Tibial artery (tissue), 4 donors: ENCODE measurements at regions of chr5 and their contacts with region 1.

Region 1: GRCh38 chr5:125446996-125447395 is 700.6 kb upstream of the ZNF608 start:
- DNase-seq: no peak
- H3K4me3 ChIP-seq: no peak overlapping the region
- H3K27ac ChIP-seq: no peak overlapping the region
- H3K4me1 ChIP-seq: no peaks in the 10 kb centered on the region
- H3K27me3 ChIP-seq: no peaks in the 10 kb centered on the region
- CTCF ChIP-seq: no peak

Region 2: GRCh38 chr5:125536582-125536981 is 89.6 kb after region 1 on chr5:
- intact Hi-C with region 1: no loop called
- DNase-seq: no peak
- H3K4me3 ChIP-seq: no peak overlapping the region
- H3K27ac ChIP-seq: no peak overlapping the region
- H3K4me1 ChIP-seq: no peaks in the 10 kb centered on the region
- H3K27me3 ChIP-seq: no peaks in the 10 kb centered on the region
- CTCF ChIP-seq: no peak

Region 3: DNA sequence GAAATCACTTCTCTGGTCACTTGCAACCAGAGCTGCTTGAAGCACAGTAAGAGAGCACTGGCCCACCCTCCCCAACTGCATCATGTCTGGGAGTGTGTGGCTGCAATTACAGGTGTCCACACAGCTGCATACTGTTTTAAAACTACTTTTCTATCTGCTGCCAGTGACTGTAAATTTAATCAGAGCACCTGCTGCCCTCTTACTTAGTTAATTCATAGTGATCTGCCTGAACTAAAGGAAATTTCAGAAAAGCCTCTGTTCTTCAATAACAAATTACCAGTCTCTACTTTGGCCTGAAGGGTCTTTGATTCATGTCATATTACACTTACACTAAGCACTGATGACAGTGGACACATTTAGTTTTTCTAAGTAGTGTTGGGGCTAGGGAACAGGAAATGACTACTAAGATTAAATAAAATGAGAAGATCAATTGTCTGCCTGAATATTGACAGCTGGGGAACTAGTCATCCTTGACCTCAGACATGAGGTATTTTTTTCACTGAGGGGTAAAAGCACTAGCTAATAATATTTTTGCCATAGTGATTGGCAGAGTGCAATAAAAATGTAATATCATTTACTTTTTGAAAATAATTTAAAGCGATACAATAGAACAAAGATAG is 187.3 kb after region 1 on chr5:
- intact Hi-C with region 1: loop called (anchors 5 kb)
- DNase-seq: no peak
- H3K4me3 ChIP-seq: no peak overlapping the region
- H3K27ac ChIP-seq: no peak overlapping the region
- H3K4me1 ChIP-seq: no peaks in the 10 kb centered on the region
- H3K27me3 ChIP-seq: no peaks in the 10 kb centered on the region
- CTCF ChIP-seq: no peak